Activated CD4-positive, alpha-beta T cell treated with anti-CD3 and anti-CD28 coated beads for 36 hours (primary cell): ENCODE measurements at regions of chr12 and their contacts with region 1.

Region 1: DNA sequence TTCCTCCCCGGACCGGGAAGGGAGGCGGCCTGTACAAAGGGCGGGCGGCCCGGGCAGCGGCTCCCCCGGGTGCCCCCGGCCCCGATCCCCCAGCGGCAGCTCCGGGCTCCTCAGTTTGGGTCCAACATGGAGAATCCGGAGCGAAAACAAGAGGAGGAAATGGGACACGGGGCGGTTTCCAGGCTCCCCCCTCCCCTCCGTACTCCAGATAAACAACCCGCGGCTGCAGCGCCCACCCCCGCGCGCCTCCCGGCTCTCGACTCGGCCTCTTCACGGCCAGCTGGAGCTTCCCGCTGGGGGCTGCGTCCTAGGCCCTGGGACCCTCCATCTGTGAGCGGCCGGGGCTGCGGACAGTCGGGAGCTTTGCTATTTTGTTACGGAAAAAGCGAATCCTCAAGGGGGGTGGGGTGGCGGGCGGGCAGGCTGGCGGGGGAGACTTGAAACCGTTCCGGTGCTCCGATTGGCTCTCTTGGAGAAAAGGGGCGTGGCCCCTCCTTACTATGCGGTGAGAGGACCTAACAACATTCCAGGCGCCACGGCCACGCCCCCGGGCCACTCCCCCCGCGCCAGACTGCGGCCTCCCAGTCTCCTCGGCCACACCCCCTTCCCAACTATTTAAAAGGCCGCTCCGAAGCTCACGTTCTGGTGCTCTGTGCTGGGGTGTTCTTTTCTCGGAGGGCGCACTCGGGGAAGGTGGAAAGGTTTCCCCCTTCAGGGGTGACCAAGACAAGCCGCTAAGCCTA is at the start of gene CTDSP2:
- DNase-seq: peak; percentile 94
- ATAC-seq: peak; percentile 43
- H3K4me3 Mint-ChIP-seq: peak within 1 kb of the TSS; percentile 78
- H3K27ac Mint-ChIP-seq: peak within 1 kb of the TSS; percentile 70
- H3K4me1 Mint-ChIP-seq: peaks cover 44% of the 10 kb centered on the region
- H3K27me3 Mint-ChIP-seq: peaks cover 5% of the 10 kb centered on the region
- total RNA-seq, gene CTDSP2: 80.9 to 85.4 TPM

Region 2: DNA sequence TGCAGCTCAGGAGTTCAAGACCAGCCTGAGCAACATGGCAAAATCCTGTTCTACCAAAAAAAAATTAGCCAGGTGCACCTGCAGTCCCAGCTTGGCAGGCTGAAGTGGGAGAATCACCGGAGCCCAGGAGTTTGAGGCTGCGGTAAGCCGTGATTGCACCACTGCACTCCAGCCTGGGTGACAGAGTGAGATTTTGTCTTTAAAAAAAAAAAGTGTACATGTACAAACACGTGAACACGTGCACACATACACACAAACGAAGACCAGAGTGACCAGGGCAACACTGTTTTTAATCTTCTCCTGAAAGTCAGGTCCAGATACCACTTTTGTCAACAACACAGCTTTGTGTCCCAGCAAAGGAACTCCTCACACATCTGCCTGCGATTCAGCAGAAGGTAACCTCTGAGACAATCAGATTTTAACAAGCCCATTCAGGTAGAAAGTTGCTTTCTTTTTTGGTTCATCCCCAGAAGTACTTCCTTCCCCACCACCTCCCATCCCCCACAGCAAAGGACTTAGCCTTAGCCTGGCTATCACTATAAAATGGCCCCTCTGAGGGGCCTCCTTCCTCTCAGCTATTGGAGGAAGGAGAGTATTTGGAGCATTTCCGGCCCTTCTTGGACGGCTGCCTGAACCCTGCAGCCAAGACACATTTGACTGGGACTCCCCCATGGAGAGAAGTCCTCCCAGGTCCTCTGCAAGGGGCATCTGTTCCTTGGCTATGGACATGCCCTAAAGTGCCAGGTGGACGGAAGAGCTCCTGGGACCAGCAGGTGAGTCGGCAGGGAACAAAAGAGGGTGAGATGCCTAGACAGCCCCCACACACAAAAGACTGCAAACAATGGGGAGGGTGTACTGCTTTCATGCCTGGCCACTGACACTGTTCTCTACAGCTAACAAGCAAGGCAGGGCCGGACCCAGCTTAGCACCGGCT is 10.0 kb before region 1 on chr12:
- CTCF ChIA-PET with region 1: interaction called, 62 read pairs
- POLR2A ChIA-PET with region 1: interaction called, 4 read pairs
- intact Hi-C with region 1: no loop called
- DNase-seq: peak; percentile 68
- ATAC-seq: peak; percentile 51
- H3K4me3 Mint-ChIP-seq: peak overlapping the region; percentile 49
- H3K27ac Mint-ChIP-seq: peak overlapping the region; percentile 85
- H3K4me1 Mint-ChIP-seq: peaks cover 94% of the 10 kb centered on the region
- H3K27me3 Mint-ChIP-seq: no peaks in the 10 kb centered on the region

Region 3: DNA sequence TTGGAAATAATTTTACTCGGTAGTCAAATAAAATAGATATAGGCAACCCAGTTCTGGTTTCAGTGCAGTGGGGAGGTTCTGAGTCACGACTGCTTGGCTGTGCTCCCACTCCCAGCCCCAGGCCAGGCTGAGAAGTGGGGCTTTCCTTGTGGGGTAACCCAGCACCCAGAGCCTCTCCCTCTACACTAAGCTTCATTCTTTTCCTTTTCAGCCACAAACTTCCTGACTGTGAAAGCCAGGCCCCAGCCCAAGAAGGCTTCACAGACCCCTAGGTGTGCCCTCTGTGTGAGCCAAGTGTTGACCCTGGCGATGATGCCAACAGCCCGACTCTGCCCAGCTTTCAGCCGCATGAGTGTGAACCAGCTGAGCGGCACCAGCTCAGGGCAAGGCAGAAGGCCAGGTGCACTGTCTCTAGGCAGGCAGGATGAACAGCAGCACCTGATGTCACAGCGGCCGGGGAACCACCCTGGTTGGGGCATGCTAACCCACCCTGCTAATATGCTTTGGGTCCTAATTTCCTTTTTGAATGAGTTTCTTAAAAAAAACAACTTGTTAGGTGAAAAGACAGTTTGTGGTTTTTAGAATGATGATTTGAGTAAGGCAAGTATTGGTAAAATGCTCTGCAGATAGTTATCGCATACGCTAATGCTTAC is 52.4 kb after region 1 on chr12:
- CTCF ChIA-PET with region 1: interaction called, 15 read pairs
- POLR2A ChIA-PET with region 1: interaction called, 7 read pairs
- intact Hi-C with region 1: loop called (anchors 1 kb)
- DNase-seq: peak; percentile 91
- ATAC-seq: peak; percentile 92
- H3K4me3 Mint-ChIP-seq: peak overlapping the region; percentile 23
- H3K27ac Mint-ChIP-seq: peak overlapping the region; percentile 92
- H3K4me1 Mint-ChIP-seq: peaks cover 48% of the 10 kb centered on the region
- H3K27me3 Mint-ChIP-seq: no peaks in the 10 kb centered on the region

Region 4: DNA sequence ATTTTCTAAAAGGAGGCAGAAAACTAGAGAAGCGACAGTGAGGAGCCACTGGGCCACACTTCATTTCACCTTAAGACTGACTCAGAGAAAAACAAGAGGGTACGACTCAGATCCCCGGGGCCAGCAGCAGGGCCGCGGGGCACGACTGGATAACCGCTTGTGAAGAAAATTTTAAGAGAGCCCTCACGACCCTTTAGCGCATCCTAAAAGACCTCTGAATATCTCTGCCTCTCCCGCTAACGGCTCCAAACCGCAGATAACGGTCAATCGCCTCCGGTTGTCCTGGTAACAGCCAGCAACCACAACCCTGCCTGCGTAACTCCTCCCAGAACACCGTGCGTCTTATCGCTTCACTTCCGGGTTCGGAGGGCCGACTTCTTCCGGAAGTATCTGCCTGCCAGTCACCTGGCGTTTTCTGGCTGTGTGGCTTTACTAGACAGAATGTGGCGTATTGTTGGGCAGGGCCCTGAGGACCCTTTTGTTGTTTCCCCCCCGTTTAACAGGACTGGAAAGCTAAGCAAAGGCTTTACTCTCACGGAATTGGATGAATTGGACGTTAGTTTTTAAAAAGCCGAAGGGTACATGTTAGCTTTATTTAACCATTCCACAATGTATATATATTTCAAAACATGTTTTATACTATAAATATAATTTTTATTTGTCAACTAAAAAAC is 89.2 kb after region 1 on chr12:
- CTCF ChIA-PET with region 1: interaction called, 5 read pairs
- POLR2A ChIA-PET with region 1: interaction called, 3 read pairs
- intact Hi-C with region 1: loop called (anchors 1 to 2 kb)
- DNase-seq: peak; percentile 95
- ATAC-seq: peak; percentile 92
- H3K4me3 Mint-ChIP-seq: peak overlapping the region; percentile 95
- H3K27ac Mint-ChIP-seq: peak overlapping the region; percentile 97
- H3K4me1 Mint-ChIP-seq: peaks cover 29% of the 10 kb centered on the region
- H3K27me3 Mint-ChIP-seq: no peaks in the 10 kb centered on the region

Region 5: GRCh38 chr12:58291106-58291505 is 444.4 kb after region 1 on chr12:
- CTCF ChIA-PET with region 1: no interaction called
- POLR2A ChIA-PET with region 1: no interaction called
- intact Hi-C with region 1: no loop called
- DNase-seq: no peak
- ATAC-seq: no peak
- H3K4me3 Mint-ChIP-seq: no peak overlapping the region
- H3K27ac Mint-ChIP-seq: no peak overlapping the region
- H3K4me1 Mint-ChIP-seq: no peaks in the 10 kb centered on the region
- H3K27me3 Mint-ChIP-seq: peaks cover 13% of the 10 kb centered on the region

Region 6: GRCh38 chr12:59595883-59596540 is 1749.3 kb after region 1 on chr12 and contains the start of gene SLC16A7:
- CTCF ChIA-PET with region 1: no interaction called
- POLR2A ChIA-PET with region 1: no interaction called
- intact Hi-C with region 1: loop called in 1 of 2 experiments (anchors 2 kb)
- DNase-seq: peak; percentile 91
- ATAC-seq: peak; percentile 54
- H3K4me3 Mint-ChIP-seq: peak within 1 kb of the TSS; percentile 82
- H3K27ac Mint-ChIP-seq: peak within 1 kb of the TSS; percentile 100
- H3K4me1 Mint-ChIP-seq: peaks cover 53% of the 10 kb centered on the region
- H3K27me3 Mint-ChIP-seq: no peaks in the 10 kb centered on the region
- total RNA-seq, gene SLC16A7: 33.0 to 34.8 TPM